CD4-positive, alpha-beta T cell (primary cell): ENCODE measurements at regions of chr16 and their contacts with region 1.

Region 1: GRCh38 chr16:3023669-3024478 is at the starts of genes HCFC1R1 and THOC6:
- DNase-seq: peak; percentile 90 to 99 (median 95)
- ATAC-seq: peak; percentile 76
- H3K4me3 ChIP-seq: peak within 1 kb of the TSS; percentile 78
- H3K4me3 Mint-ChIP-seq: peak within 1 kb of the TSS; percentile 66
- H3K27ac ChIP-seq: peak within 1 kb of the TSS; percentile 80 to 96
- H3K27ac Mint-ChIP-seq: peak within 1 kb of the TSS; percentile 78
- H3K4me1 ChIP-seq: peaks cover 77% of the 10 kb centered on the region
- H3K4me1 Mint-ChIP-seq: peaks cover 51% of the 10 kb centered on the region
- H3K27me3 ChIP-seq: peaks cover 0 to 4% of the 10 kb centered on the region in 2 experiments
- H3K27me3 Mint-ChIP-seq: peaks cover 1% of the 10 kb centered on the region
- CTCF ChIP-seq: no peak
- total RNA-seq, gene HCFC1R1: 8.9 to 11.0 TPM
- total RNA-seq, gene THOC6: 12.0 to 12.9 TPM

Region 2: DNA sequence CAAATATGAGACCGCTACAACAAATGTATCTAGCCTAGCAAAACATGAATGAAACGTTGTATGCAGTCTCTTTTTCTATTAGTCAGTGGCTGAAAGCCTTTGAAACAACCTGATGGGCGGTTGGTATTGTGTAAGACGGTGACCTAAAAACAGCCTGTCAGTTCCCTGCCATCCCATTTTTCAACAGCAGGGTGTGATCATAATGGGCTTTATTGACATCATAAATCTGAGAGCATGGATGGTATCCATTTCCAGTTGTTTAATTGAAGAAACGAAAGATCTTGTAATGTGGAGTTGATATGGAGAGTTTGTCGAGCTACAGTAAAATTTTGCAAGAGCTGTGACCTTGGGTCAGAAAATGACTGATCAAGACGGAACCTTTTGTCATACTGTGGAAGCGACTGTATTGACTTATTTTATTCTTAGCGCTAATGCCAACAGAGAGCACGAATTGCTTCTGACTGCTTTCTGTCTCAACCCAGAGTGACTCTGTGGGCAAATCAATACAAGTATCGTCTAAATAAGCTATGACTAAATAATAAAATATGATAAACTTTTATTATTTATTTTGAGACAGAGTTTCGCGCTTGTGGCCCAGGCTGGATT is 1139.6 kb before region 1 on chr16:
- CTCF ChIA-PET with region 1: no interaction called
- POLR2A ChIA-PET with region 1: no interaction called
- intact Hi-C with region 1: no loop called
- DNase-seq: peak in 1 of 14 experiments; percentile 27
- ATAC-seq: no peak
- H3K4me3 ChIP-seq: no peak overlapping the region
- H3K4me3 Mint-ChIP-seq: no peak overlapping the region
- H3K27ac ChIP-seq: no peak overlapping the region
- H3K27ac Mint-ChIP-seq: no peak overlapping the region
- H3K4me1 ChIP-seq: no peaks in the 10 kb centered on the region
- H3K4me1 Mint-ChIP-seq: no peaks in the 10 kb centered on the region
- H3K27me3 ChIP-seq: peaks cover 3 to 4% of the 10 kb centered on the region in 2 experiments
- H3K27me3 Mint-ChIP-seq: peaks cover 10% of the 10 kb centered on the region
- CTCF ChIP-seq: no peak

Region 3: GRCh38 chr16:2860826-2861567 is 162.9 kb before region 1 on chr16:
- CTCF ChIA-PET with region 1: no interaction called
- POLR2A ChIA-PET with region 1: no interaction called
- intact Hi-C with region 1: no loop called
- DNase-seq: peak in 1 of 14 experiments; percentile 31
- ATAC-seq: no peak
- H3K4me3 ChIP-seq: no peak overlapping the region
- H3K4me3 Mint-ChIP-seq: no peak overlapping the region
- H3K27ac ChIP-seq: no peak overlapping the region
- H3K27ac Mint-ChIP-seq: no peak overlapping the region
- H3K4me1 ChIP-seq: peaks cover 25% of the 10 kb centered on the region
- H3K4me1 Mint-ChIP-seq: peaks cover 5% of the 10 kb centered on the region
- H3K27me3 ChIP-seq: peaks cover 6 to 7% of the 10 kb centered on the region in 2 experiments
- H3K27me3 Mint-ChIP-seq: peaks cover 19% of the 10 kb centered on the region
- CTCF ChIP-seq: no peak

Region 4: DNA sequence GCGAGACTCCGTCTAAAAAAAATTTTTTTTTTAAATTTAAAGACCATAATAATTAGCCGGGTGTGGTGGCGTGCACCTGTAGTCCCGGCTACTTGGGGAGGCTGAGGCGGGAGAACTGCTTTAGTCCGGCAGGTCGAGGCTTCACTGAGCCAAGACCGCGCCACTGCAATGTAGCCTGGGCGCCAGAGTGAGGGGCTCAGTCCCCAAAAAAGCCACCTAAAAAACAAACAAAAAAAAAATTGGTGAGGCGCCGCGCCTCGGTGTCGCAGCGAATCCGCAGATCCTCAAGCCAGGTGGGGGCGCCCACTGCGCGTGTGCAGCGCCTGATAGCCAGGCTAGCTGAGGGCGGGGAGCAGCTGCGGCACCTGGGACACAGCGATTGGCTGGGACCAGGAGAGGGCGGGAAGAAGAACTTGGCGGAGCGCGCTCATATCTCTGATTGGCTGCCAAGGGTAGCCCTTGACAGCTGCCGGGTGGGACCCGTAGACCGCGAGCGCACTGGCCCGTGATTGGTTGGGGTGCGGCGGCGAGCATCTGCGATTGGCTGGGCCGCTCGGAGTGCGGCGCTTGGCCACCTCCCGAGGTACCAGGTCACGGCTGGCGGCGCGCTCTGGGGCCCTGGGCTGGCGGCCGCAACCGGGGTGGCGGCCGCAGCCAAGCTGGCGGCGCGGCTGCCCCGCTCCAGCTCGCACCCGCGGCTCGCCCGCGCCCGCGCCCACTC is 20.1 kb before region 1 on chr16:
- CTCF ChIA-PET with region 1: interaction called, 181 read pairs
- POLR2A ChIA-PET with region 1: interaction called, 20 read pairs
- intact Hi-C with region 1: loop called (anchors 1 to 2 kb)
- DNase-seq: peak; percentile 90 to 99 (median 95)
- ATAC-seq: peak; percentile 99
- H3K4me3 ChIP-seq: no peak overlapping the region
- H3K4me3 Mint-ChIP-seq: peak overlapping the region; percentile 67
- H3K27ac ChIP-seq: no peak overlapping the region
- H3K27ac Mint-ChIP-seq: peak overlapping the region; percentile 13
- H3K4me1 ChIP-seq: peaks cover 32% of the 10 kb centered on the region
- H3K4me1 Mint-ChIP-seq: peaks cover 31% of the 10 kb centered on the region
- H3K27me3 ChIP-seq: peaks cover 0 to 3% of the 10 kb centered on the region in 2 experiments
- H3K27me3 Mint-ChIP-seq: peaks cover 27% of the 10 kb centered on the region
- CTCF ChIP-seq: peak; percentile 64

Region 5: DNA sequence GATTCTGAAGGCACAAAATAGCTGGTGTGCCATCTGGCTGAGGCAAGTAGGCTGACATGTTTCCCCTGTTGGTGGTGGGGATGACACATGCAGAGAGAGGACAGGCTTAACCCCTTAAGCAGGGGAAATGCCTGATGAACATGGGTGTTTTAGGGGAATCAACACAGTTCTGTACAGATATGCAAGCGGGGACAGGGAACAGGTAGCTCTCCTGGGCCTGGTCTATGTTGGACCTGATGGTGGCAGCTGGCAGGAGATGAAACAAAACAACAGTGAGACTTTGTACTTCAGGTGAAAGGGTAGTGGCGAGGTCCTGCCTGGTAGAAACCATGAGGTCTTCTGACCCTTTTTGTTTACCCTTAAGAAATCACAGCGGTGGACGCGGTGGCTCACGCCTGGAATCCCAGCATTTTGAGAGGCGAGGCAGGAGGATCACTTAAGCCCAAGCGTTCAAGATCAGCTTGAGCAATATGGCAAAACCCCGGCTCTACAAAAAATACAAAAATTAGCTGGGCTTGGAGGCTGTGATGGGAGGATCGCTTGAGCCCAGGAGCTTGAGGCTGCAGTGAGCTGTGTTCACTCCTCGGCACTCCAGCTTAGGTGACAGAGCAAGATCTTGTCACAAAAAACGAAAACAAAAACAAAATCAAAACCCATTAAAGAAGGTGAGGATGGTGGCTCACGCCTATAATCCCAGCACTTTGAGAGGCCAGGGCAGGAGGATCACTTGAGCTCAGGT is 174.6 kb after region 1 on chr16:
- CTCF ChIA-PET with region 1: no interaction called
- POLR2A ChIA-PET with region 1: no interaction called
- intact Hi-C with region 1: no loop called
- DNase-seq: no peak
- ATAC-seq: no peak
- H3K4me3 ChIP-seq: no peak overlapping the region
- H3K4me3 Mint-ChIP-seq: no peak overlapping the region
- H3K27ac ChIP-seq: no peak overlapping the region
- H3K27ac Mint-ChIP-seq: no peak overlapping the region
- H3K4me1 ChIP-seq: no peaks in the 10 kb centered on the region
- H3K4me1 Mint-ChIP-seq: no peaks in the 10 kb centered on the region
- H3K27me3 ChIP-seq: peaks cover 18 to 30% of the 10 kb centered on the region in 2 experiments
- H3K27me3 Mint-ChIP-seq: peaks cover 36% of the 10 kb centered on the region
- CTCF ChIP-seq: no peak